GM12878 (cell line): ENCODE measurements at regions of chr3 and their contacts with region 1.

Region 1: GRCh38 chr3:102673271-102674115 is 238.7 kb downstream of the ZPLD1 start:
- DNase-seq: peak; percentile 5
- ATAC-seq: peak; percentile 86
- H3K4me3 ChIP-seq: no peak overlapping the region
- H3K27ac ChIP-seq: no peak overlapping the region
- H3K4me1 ChIP-seq: no peaks in the 10 kb centered on the region
- H3K27me3 ChIP-seq: no peaks in the 10 kb centered on the region; a peak in 1 of 4 replicates
- CTCF ChIP-seq: peak; percentile 75 to 90 (median 83); a peak in 5 of 6 replicates
- EP300 ChIP-seq: no peak
- POLR2A ChIP-seq: no peak
- RAD21 ChIP-seq: peak; percentile 96

Region 2: GRCh38 chr3:102419786-102420185 is 253.7 kb before region 1 on chr3:
- CTCF ChIA-PET with region 1: no interaction called
- POLR2A ChIA-PET with region 1: no interaction called
- RAD21 ChIA-PET with region 1: no interaction called
- SMC1A ChIA-PET with region 1: no interaction called
- in situ Hi-C with region 1: no loop called
- intact Hi-C with region 1: no loop called
- DNase-seq: no peak
- ATAC-seq: no peak
- H3K4me3 ChIP-seq: no peak overlapping the region
- H3K27ac ChIP-seq: no peak overlapping the region
- H3K4me1 ChIP-seq: no peaks in the 10 kb centered on the region
- H3K27me3 ChIP-seq: no peaks in the 10 kb centered on the region
- CTCF ChIP-seq: no peak
- EP300 ChIP-seq: no peak
- POLR2A ChIP-seq: no peak
- RAD21 ChIP-seq: no peak

Region 3: GRCh38 chr3:102593812-102594602 is 79.5 kb before region 1 on chr3:
- CTCF ChIA-PET with region 1: no interaction called
- POLR2A ChIA-PET with region 1: no interaction called
- RAD21 ChIA-PET with region 1: no interaction called
- SMC1A ChIA-PET with region 1: no interaction called
- in situ Hi-C with region 1: no loop called
- intact Hi-C with region 1: no loop called
- DNase-seq: no peak
- ATAC-seq: peak; percentile 25; the same call in 1 of the 3 replicates
- H3K4me3 ChIP-seq: no peak overlapping the region
- H3K27ac ChIP-seq: no peak overlapping the region
- H3K4me1 ChIP-seq: no peaks in the 10 kb centered on the region
- H3K27me3 ChIP-seq: no peaks in the 10 kb centered on the region
- CTCF ChIP-seq: no peak
- EP300 ChIP-seq: no peak
- POLR2A ChIP-seq: no peak
- RAD21 ChIP-seq: no peak

Region 4: DNA sequence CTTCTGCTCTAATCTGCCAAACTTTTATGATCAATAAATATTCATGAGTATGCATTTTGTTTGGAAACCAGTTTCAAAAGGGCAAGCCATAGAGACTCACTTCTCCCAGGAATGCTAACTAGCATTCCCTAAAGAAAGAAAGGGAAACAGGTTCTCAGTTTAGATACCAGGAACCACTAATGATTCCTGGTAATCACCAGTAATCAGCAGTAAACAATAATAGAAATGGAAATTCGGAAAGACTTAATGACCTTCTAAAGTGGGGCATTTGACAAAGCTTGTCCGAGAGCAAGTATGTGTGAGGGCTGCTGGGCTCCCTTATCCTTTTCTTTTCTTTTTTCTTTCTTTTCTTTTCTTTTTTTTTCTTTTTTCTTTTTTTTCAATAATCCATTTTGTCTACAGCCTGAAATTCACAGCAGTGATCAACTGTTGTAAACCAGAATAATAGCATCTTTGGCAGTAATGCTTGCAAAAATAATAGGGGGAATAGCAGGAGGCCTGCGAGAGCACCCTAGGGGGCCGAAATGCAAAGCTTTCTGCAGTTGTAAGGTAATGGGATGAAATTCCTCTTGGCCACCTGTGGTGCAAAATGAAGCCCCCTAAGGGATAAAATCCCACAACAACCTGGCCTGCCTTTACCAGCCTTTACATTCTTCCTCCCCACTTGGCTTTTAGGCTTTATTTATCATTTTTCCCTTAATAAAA is 14.5 kb after region 1 on chr3:
- CTCF ChIA-PET with region 1: interaction called, 28 read pairs
- POLR2A ChIA-PET with region 1: no interaction called
- RAD21 ChIA-PET with region 1: interaction called, 5 read pairs
- SMC1A ChIA-PET with region 1: interaction called, 17 read pairs
- in situ Hi-C with region 1: no loop called
- intact Hi-C with region 1: no loop called
- DNase-seq: no peak
- ATAC-seq: no peak
- H3K4me3 ChIP-seq: no peak overlapping the region
- H3K27ac ChIP-seq: no peak overlapping the region
- H3K4me1 ChIP-seq: no peaks in the 10 kb centered on the region
- H3K27me3 ChIP-seq: no peaks in the 10 kb centered on the region
- CTCF ChIP-seq: no peak
- EP300 ChIP-seq: no peak
- POLR2A ChIP-seq: no peak
- RAD21 ChIP-seq: no peak

Region 5: DNA sequence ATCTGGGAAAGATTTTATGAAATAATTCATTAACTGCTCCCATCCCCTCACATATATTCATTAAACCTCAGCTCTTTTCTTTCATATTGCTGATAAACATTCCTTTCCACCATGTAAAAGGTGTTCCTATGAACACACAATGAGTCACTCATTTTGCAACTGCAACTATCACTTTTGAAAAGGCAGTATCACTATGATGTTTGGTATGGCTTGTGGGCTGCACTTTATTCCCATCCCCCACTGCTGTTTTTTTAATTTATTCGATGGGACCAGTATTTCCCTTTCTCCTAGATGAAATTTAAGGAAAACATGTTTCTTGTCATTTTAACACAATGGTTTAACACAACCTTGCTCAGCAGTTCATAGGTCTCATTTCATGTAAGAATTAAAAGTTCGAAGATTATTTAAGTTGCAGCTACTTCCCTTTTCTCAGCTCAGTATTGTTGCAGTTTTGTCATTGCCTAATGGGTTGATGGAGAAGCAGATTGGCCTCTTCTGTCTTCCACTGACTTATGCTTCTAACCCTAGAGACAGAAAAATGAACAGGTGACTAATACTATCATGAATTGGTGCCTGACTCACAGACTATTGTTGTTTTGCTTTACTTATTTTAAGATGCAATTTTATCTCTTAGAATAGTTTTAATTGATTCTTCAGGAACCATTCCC is 41.7 kb after region 1 on chr3:
- CTCF ChIA-PET with region 1: interaction called, 43 read pairs
- POLR2A ChIA-PET with region 1: interaction called, 5 read pairs
- RAD21 ChIA-PET with region 1: interaction called, 3 read pairs
- SMC1A ChIA-PET with region 1: interaction called, 10 read pairs
- in situ Hi-C with region 1: no loop called
- intact Hi-C with region 1: no loop called
- DNase-seq: peak; percentile 20
- ATAC-seq: peak; percentile 99
- H3K4me3 ChIP-seq: no peak overlapping the region
- H3K27ac ChIP-seq: peak overlapping the region; percentile 52; the same call in 1 of the 2 replicates
- H3K4me1 ChIP-seq: no peaks in the 10 kb centered on the region
- H3K27me3 ChIP-seq: no peaks in the 10 kb centered on the region; a peak in 1 of 4 replicates
- CTCF ChIP-seq: no peak
- EP300 ChIP-seq: peak; percentile 44 to 78; a peak in 3 of 4 replicates
- POLR2A ChIP-seq: no peak
- RAD21 ChIP-seq: no peak

Region 6: GRCh38 chr3:102745882-102746281 is 72.4 kb after region 1 on chr3:
- CTCF ChIA-PET with region 1: interaction called, 180 read pairs
- POLR2A ChIA-PET with region 1: no interaction called
- RAD21 ChIA-PET with region 1: interaction called, 98 read pairs
- SMC1A ChIA-PET with region 1: interaction called, 122 read pairs
- in situ Hi-C with region 1: no loop called
- intact Hi-C with region 1: loop called (anchors 1 kb)
- DNase-seq: no peak
- ATAC-seq: peak; percentile 16; the same call in 1 of the 3 replicates
- H3K4me3 ChIP-seq: no peak overlapping the region
- H3K27ac ChIP-seq: no peak overlapping the region
- H3K4me1 ChIP-seq: no peaks in the 10 kb centered on the region
- H3K27me3 ChIP-seq: no peaks in the 10 kb centered on the region
- CTCF ChIP-seq: peak in 1 of 3 experiments; percentile 15; a peak in 1 of 6 replicates
- EP300 ChIP-seq: no peak
- POLR2A ChIP-seq: no peak
- RAD21 ChIP-seq: no peak